OCI-LY7 (cell line): ENCODE measurements at regions of chrX and their contacts with region 1.

Region 1: GRCh38 chrX:1502241-1502640 is 34.7 kb downstream of the P2RY8 start:
- DNase-seq: peak; percentile 98
- H3K4me3 ChIP-seq: peak overlapping the region; percentile 33
- H3K27ac ChIP-seq: peak overlapping the region; percentile 96
- H3K4me1 ChIP-seq: peaks cover 91% of the 10 kb centered on the region
- CTCF ChIP-seq: no peak

Region 2: DNA sequence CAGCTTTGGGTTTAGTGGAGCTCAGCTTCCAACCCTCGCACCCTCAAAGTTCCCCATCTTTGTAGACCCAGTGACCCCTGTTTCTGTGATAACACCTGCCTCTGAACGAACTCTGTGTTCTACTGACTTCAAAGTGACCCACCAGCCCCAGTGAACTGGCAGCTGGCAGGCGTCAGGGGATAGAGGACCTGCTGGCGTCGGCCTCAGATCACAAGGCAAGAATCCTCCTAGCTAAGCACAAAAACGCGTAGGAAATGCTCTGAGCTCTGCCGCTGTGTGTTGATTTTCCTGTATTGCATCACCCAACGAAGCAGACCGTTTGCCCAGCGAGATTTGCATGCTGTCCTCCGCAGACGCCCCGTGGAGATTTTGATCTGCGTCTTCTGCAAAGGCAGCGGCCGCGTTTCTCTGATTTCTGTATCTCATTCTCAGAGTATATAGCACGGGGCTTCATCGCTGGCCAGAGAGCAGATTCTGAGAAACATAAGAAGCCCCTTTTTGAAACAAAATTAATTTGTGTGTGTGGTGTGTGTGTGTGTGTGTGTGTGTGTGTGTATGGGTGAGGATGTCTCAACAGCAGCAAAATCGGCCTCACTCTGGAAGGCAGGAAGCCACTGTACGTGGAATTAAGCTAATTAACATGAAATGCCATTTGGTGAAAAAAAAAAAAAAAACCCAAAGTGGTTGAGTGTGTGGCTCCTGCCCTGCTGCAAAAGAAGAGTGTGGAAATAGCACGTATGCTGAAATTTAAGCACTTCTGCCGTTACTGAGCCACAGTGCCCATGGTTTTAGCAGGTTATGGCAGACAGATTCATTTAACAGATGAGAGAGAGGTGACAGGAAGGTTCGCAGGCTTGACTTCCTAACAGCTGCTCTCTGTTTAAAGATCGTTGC is 20.4 kb before region 1 on chrX:
- CTCF ChIA-PET with region 1: no interaction called
- POLR2A ChIA-PET with region 1: no interaction called
- intact Hi-C with region 1: loop called (anchors 2 kb)
- DNase-seq: peak; percentile 98
- H3K4me3 ChIP-seq: peak overlapping the region; percentile 54
- H3K27ac ChIP-seq: peak overlapping the region; percentile 100
- H3K4me1 ChIP-seq: peaks cover 96% of the 10 kb centered on the region
- CTCF ChIP-seq: no peak

Region 3: DNA sequence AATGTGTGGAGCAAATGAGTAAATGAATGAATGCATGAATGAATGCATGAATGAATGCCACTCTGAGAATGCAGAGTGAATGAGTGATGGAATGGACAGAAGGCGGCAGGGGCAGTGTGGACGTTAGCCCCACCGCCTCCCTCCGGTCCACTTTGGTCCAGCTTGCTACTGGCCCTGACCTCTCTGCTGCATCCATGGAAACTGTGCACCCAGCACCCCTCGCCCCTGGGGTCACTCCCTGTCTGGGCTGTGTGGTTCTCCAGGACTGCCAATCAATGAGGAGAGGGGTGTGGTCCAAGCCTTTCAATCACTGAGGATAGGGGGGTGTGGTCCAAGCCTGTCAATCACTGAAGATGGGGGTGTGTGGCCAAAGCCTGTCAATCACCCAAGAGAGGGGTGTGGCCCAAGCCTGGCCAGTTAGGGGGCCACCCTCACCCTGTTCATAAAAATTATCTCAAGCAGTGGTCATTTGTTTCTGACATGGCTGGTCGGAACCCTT is 10.3 kb before region 1 on chrX:
- CTCF ChIA-PET with region 1: no interaction called
- POLR2A ChIA-PET with region 1: no interaction called
- intact Hi-C with region 1: loop called (anchors 1 kb)
- DNase-seq: peak; percentile 97
- H3K4me3 ChIP-seq: peak overlapping the region; percentile 73
- H3K27ac ChIP-seq: peak overlapping the region; percentile 88
- H3K4me1 ChIP-seq: peaks cover 60% of the 10 kb centered on the region
- CTCF ChIP-seq: no peak

Region 4: GRCh38 chrX:1521459-1521956 is 19.3 kb after region 1 on chrX:
- CTCF ChIA-PET with region 1: no interaction called
- POLR2A ChIA-PET with region 1: no interaction called
- intact Hi-C with region 1: loop called (anchors 1 kb)
- DNase-seq: peak; percentile 99
- H3K4me3 ChIP-seq: peak overlapping the region; percentile 58
- H3K27ac ChIP-seq: peak overlapping the region; percentile 91
- H3K4me1 ChIP-seq: peaks cover 67% of the 10 kb centered on the region
- CTCF ChIP-seq: no peak